ENCODE measurements at regions of chr6 and their contacts with region 1.

Region 1: GRCh38 chr6:90478789-90479602 is 107.9 kb downstream of the MAP3K7 start:
- DNase-seq: peak; percentile 89
- H3K4me3 ChIP-seq: no peak overlapping the region
- H3K27ac ChIP-seq: no peak overlapping the region
- H3K27me3 ChIP-seq: no peaks in the 10 kb centered on the region
- CTCF ChIP-seq: peak; percentile 93

Region 2: GRCh38 chr6:89928604-89929003 is 550.4 kb before region 1 on chr6:
- CTCF ChIA-PET with region 1: interaction called, 10 read pairs
- POLR2A ChIA-PET with region 1: no interaction called
- DNase-seq: no peak
- H3K4me3 ChIP-seq: no peak overlapping the region
- H3K27ac ChIP-seq: no peak overlapping the region
- H3K27me3 ChIP-seq: no peaks in the 10 kb centered on the region
- CTCF ChIP-seq: no peak

Region 3: GRCh38 chr6:89970609-89971337 is 508.2 kb before region 1 on chr6:
- CTCF ChIA-PET with region 1: interaction called, 18 read pairs
- POLR2A ChIA-PET with region 1: no interaction called
- DNase-seq: no peak
- H3K4me3 ChIP-seq: no peak overlapping the region
- H3K27ac ChIP-seq: no peak overlapping the region
- H3K27me3 ChIP-seq: peaks cover 4% of the 10 kb centered on the region
- CTCF ChIP-seq: peak; percentile 73

Region 4: DNA sequence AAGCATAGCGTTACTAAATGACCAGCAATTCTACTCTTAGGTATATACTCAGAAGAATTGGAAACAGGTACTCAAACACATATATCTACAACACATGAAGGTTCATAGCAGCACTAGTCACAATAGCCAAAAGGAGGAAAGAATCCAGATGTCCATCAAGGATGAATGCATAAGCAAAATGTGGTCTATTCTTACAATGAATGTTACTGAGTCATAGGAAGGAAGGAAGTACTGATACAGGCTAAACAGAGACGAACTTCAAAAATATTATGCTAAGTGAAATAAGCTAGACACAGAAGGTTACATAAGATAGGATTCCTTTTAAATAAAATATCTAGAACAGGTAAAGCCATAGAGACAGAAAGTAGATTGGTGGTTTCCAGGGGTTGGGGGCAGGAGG is 14.3 kb after region 1 on chr6:
- CTCF ChIA-PET with region 1: interaction called, 13 read pairs
- POLR2A ChIA-PET with region 1: no interaction called
- DNase-seq: no peak
- H3K4me3 ChIP-seq: no peak overlapping the region
- H3K27ac ChIP-seq: no peak overlapping the region
- H3K27me3 ChIP-seq: peaks cover 4% of the 10 kb centered on the region
- CTCF ChIP-seq: no peak